ENCODE measurements at regions of chr12 and their contacts with region 1.

Region 1: DNA sequence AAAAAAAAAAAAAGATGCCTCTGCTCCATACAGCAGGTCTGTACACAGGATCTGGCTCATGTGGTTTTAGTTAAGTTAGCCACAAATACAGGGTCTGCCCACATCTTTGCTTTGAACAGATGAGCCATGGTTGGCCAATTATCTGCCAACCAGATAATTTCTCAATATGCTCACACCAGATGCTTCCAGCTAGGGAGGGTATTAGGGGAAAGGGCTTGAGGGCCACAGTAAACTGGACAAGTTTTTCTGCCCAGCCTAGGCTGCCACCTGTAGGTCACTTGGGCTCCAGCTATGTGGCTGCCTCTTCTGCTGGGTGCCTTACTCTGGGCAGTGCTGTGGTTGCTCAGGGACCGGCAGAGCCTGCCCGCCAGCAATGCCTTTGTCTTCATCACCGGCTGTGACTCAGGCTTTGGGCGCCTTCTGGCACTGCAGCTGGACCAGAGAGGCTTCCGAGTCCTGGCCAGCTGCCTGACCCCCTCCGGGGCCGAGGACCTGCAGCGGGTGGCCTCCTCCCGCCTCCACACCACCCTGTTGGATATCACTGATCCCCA is 776 bp downstream of the RDH5 start:
- DNase-seq: peak; percentile 85

Region 2: DNA sequence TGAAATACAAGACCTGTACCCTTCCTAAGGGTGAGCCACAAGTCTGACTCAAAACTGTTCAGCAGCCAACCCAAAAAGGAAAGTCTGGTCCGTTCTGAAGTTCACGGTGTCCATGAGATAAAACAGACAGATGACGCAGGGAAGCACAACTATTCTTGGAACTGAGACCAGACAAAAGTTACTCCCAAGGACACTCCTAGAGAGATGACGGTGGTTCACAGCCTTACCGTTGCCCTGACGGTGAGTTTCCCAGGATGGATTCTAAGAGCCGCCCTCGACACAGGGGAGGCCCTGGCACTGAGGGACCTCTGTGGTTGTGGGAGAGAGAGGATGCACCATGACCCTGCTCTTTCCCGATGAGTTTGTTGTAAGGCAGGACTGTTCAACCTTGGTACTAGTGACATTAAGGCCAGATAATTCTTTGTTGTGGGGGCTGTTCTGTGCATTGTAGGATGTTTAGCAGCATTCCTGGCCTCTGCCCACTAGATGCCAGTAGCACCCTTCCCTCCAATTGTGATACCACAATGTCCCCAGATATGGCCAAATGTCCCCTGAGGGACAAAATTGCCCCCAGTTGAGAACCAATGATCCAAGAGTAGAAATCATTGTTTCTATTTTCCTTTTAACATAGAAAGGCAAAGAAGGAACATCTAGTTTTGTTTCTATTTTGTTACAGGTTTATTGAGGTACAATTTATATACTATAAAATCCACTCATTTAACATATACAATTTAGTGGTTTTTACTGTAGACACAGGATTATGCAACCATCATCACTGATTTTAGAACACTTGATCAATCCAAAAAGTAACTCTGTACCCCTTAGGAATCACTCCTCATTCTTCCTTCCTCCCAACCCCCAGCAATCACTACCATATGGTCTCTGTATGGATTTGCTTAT is 61.2 kb before region 1 on chr12:
- intact Hi-C with region 1: loop called (anchors 2 kb)
- DNase-seq: peak; percentile 76

Region 3: GRCh38 chr12:55681142-55682077 is 39.6 kb before region 1 on chr12:
- intact Hi-C with region 1: loop called (anchors 2 kb)
- DNase-seq: peak; percentile 82

Region 4: GRCh38 chr12:55700255-55701018 is 20.5 kb before region 1 on chr12:
- intact Hi-C with region 1: loop called (anchors 2 kb)
- DNase-seq: peak; percentile 76

Measured in cardiac septum (tissue), 1 donor.